Esophagus muscularis mucosa (tissue), 4 donors: ENCODE measurements at regions of chr4 and their contacts with region 1.

Region 1: DNA sequence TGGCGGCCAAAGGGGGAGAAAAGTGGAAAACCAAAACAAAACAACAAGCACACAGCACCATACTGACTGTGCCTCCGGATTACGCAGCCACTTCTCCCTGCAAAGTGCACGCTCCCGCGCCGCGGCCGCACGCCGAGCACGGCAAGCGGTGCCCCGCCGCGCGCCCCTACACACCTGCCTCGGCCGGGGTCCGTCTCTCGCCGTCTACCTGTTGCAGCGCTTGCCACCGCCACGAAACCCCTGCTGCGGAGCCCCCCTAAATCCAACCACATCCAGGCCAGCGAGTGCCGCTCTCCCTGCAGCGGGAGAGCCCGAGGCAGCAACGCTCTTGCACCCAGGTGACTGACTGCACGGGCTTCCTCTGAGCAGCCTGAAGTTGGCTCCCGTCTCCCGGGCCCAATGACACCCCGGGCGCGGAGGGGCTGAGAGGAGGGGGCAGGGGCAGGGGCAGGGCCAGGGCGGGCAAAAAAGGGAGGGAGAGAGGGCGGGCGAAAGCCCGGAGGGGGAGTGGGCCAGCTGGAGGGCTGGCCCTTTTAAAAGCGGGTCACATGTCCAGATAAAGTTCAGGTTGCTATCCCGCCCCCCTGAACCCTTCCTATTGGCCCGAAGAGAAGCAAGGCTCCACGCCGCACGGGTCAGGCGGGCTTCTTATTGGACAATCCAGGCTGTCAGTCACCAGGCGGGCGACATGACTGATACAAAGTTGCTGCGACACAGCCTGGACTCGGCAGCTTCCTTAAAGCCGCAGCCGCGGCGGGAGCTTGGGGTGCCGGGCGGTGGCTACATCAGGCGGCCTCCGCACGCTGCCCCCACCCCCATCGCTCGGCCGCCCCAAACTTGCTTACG is at the start of gene NR3C2:
- DNase-seq: peak; percentile 100
- H3K4me3 ChIP-seq: peak within 1 kb of the TSS; percentile 74 to 95 (median 88)
- H3K27ac ChIP-seq: peak within 1 kb of the TSS; percentile 91 to 96 (median 94)
- H3K4me1 ChIP-seq: peaks cover 18 to 39% (median 32%) of the 10 kb centered on the region in 4 donors
- H3K27me3 ChIP-seq: no peaks in the 10 kb centered on the region
- CTCF ChIP-seq: no peak
- EP300 ChIP-seq: no peak
- POLR2A ChIP-seq: peak; percentile 98
- total RNA-seq, gene NR3C2: 10.0 to 14.6 (median 12.1) TPM

Region 2: DNA sequence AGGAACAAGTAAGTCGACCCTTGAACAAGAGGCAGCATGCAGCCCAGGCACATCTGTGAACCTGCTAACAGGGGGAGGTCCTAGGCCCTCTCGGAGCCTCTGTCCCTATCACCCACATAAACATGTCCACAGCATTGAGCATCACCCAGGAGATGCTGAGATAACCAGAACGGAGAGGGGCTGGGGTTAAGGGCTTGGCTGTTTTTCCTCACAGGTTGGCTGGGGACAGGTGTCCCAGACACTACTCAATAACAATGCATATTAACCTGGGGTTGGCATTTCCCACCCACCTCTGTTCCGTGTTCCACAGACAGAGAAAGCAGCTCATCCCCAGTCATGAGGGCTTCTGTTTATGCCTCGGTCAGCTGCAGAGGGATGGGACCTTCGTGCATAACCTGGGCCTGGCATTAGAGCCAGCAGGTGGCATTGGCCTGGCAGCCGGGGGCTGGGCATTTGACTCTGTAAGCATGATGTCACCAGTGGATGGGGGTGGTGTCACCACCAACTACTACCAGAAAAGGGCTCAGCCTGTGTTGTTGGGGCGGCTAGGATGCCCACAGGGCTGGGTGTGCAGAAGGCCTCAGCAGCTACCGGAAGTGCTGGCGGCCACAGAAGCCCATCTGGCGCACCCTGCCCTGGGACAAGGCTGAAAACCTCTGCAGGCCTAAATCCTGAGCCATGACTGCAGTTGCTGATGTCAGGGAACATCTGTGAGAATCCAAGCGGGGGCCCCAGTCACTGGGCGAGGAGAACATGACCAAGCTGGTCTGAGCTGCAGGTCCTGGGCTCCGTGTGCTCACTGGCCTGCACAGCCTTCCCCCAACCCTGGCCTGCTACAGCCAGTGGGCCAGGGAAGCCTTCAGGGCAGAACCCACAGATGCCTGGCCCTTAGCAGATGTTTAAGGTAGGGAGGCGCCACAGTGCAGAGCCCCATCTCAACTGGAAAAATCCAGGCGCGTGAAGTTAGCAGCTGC is 351.4 kb before region 1 on chr4:
- intact Hi-C with region 1: loop called (anchors 10 kb)
- DNase-seq: peak; percentile 74
- H3K4me3 ChIP-seq: no peak overlapping the region
- H3K27ac ChIP-seq: no peak overlapping the region
- H3K4me1 ChIP-seq: peaks cover 0 to 12% (median 6%) of the 10 kb centered on the region in 4 donors
- H3K27me3 ChIP-seq: no peaks in the 10 kb centered on the region
- CTCF ChIP-seq: no peak
- EP300 ChIP-seq: no peak
- POLR2A ChIP-seq: no peak

Region 3: DNA sequence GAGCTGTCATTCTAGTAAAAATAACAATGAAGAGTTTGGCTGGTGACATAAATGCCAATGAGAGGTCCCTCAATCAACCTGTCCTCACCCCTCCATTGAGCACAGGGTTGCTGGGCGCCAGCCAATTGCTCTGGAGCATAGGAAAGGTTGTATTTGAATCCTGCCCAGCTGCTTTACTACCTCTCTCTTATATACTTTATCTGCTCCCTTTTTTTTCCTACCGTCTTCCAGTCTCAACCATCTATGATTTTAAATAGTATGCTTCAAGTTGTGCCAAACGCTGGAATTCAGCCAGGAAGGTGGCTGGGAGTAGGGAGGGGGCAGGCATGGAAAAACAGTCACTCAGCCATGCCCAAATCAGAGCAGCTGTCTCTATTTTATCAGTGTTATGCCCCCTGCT is 153.8 kb before region 1 on chr4:
- intact Hi-C with region 1: loop called (anchors 10 kb)
- DNase-seq: no peak
- H3K4me3 ChIP-seq: no peak overlapping the region
- H3K27ac ChIP-seq: no peak overlapping the region
- H3K4me1 ChIP-seq: peaks cover 31 to 59% (median 49%) of the 10 kb centered on the region in 4 donors
- H3K27me3 ChIP-seq: no peaks in the 10 kb centered on the region
- CTCF ChIP-seq: no peak
- EP300 ChIP-seq: no peak
- POLR2A ChIP-seq: no peak

Region 4: DNA sequence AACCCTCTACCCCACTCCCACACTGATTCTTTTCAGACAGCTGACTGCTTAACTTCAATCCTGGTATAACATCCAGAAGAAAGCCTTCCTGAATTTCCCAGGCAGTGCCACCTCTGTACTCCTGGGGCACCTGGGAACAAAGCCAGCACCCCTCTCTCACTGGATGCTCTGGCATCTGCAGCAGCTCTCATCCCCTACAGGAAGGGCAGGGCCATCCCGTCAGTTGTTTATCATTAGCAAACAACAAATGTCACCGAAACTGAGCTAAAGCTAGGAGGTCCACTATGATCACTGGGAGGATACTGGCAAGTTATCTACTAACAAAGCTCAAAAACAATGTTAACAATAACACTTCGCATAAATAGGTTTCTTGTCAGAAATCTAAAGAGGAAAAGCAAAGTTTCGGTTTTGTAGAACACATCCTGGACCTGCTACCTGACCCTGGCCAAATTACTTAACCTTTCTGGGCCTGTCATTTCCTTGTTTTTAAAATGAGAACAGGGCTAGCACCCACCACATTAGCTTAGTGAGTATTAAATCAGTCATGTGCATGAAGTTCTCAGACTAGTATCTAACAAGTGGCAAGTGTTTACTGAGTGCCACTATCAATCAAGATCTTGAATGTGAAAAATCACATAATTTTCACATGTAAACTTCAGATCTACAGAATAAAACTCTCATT is 86.6 kb before region 1 on chr4:
- intact Hi-C with region 1: no loop called
- DNase-seq: no peak
- H3K4me3 ChIP-seq: peak overlapping the region in 1 of 4 donors; percentile 7
- H3K27ac ChIP-seq: peak overlapping the region in 3 of 4 donors; percentile 3 to 10 (median 5)
- H3K4me1 ChIP-seq: peaks cover 0 to 14% (median 10%) of the 10 kb centered on the region in 4 donors
- H3K27me3 ChIP-seq: no peaks in the 10 kb centered on the region
- CTCF ChIP-seq: no peak
- EP300 ChIP-seq: no peak
- POLR2A ChIP-seq: no peak

Region 5: DNA sequence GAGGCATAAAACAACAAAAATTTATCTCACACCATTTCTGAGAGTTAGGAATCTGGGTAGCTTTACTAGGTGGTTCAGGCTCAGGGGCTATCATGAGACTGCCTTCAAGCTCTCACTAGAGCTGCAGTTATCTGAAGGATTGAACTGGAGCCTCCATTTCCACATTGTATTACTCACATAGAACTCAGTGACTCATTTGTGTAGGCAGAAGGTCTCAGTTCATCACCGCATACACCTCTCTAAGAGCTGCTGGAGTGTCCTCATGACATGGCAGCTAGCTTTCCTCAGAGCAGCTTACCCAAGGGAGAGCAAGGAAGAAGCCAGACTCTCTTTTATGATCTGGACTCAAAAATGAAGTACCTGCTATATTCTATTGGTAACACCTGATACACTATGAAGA is 984.3 kb after region 1 on chr4:
- intact Hi-C with region 1: no loop called
- DNase-seq: no peak
- H3K4me3 ChIP-seq: no peak overlapping the region
- H3K27ac ChIP-seq: no peak overlapping the region
- H3K4me1 ChIP-seq: no peaks in the 10 kb centered on the region
- H3K27me3 ChIP-seq: no peaks in the 10 kb centered on the region
- CTCF ChIP-seq: no peak
- EP300 ChIP-seq: no peak
- POLR2A ChIP-seq: no peak